Activated B cell treated with CpG ODN at 0.5 μM for 24 hours (primary cell): ENCODE measurements at regions of chr20 and their contacts with region 1.

Region 1: DNA sequence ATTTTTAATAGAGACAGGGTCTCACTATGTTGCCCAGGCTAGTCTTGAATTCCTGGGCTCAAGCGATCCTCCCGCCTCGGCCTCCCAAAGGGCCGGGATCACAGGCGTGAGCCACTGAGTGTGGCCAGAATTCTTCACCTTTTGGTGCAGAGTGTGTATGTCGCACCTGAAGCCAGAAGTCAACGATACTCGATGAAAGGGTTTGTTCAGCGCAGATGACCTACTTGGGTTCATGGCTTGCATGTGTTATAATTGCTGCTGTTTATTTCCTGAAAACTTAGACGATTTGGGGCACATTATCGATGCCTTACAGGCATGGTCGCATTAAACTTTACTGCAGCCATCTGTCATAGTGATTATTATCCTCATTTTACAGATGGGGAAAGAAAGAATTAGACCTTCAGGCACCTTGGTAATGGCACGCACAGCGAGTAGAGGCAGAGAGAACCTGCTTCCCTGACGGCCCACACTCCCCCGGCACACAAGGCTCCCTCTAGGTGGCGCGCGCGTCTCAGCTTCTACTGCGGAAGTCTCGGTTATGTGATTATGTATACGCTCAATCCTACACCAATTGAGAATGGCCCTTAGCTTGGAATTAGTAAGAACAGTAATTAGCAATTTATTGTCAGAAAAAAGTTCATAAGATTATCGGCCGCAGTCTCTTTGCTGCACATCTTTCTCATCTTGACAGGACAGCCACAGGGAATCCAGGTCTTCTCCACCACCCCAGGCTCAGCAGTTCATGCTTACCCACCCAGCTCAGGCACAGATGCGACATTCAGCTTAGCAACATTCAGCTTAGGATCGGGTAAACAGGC is 212.8 kb upstream of the PROKR2 start:
- DNase-seq: peak; percentile 74
- ATAC-seq: peak; percentile 92
- H3K4me3 Mint-ChIP-seq: peak overlapping the region; percentile 29
- H3K27ac Mint-ChIP-seq: peak overlapping the region; percentile 46
- H3K4me1 Mint-ChIP-seq: peaks cover 11% of the 10 kb centered on the region
- H3K27me3 Mint-ChIP-seq: no peaks in the 10 kb centered on the region
- CTCF ChIP-seq: no peak

Region 2: GRCh38 chr20:5569021-5569420 is 39.5 kb after region 1 on chr20:
- CTCF ChIA-PET with region 1: interaction called, 8 read pairs
- POLR2A ChIA-PET with region 1: no interaction called
- intact Hi-C with region 1: loop called (anchors 1 kb)
- DNase-seq: no peak
- ATAC-seq: peak; percentile 90
- H3K4me3 Mint-ChIP-seq: no peak overlapping the region
- H3K27ac Mint-ChIP-seq: peak overlapping the region; percentile 43
- H3K4me1 Mint-ChIP-seq: peaks cover 23% of the 10 kb centered on the region
- H3K27me3 Mint-ChIP-seq: no peaks in the 10 kb centered on the region
- CTCF ChIP-seq: peak; percentile 67

Region 3: GRCh38 chr20:5658912-5659345 is 129.4 kb after region 1 on chr20:
- CTCF ChIA-PET with region 1: no interaction called
- POLR2A ChIA-PET with region 1: no interaction called
- intact Hi-C with region 1: no loop called
- DNase-seq: peak; percentile 38
- ATAC-seq: peak; percentile 81
- H3K4me3 Mint-ChIP-seq: peak overlapping the region; percentile 54
- H3K27ac Mint-ChIP-seq: peak overlapping the region; percentile 88
- H3K4me1 Mint-ChIP-seq: peaks cover 54% of the 10 kb centered on the region
- H3K27me3 Mint-ChIP-seq: no peaks in the 10 kb centered on the region
- CTCF ChIP-seq: no peak

Region 4: GRCh38 chr20:5822569-5822968 is 293.0 kb after region 1 on chr20:
- CTCF ChIA-PET with region 1: interaction called, 4 read pairs
- POLR2A ChIA-PET with region 1: no interaction called
- intact Hi-C with region 1: loop called (anchors 1 kb)
- DNase-seq: no peak
- ATAC-seq: peak; percentile 72
- H3K4me3 Mint-ChIP-seq: no peak overlapping the region
- H3K27ac Mint-ChIP-seq: peak overlapping the region; percentile 38
- H3K4me1 Mint-ChIP-seq: peaks cover 30% of the 10 kb centered on the region
- H3K27me3 Mint-ChIP-seq: no peaks in the 10 kb centered on the region
- CTCF ChIP-seq: no peak

Region 5: DNA sequence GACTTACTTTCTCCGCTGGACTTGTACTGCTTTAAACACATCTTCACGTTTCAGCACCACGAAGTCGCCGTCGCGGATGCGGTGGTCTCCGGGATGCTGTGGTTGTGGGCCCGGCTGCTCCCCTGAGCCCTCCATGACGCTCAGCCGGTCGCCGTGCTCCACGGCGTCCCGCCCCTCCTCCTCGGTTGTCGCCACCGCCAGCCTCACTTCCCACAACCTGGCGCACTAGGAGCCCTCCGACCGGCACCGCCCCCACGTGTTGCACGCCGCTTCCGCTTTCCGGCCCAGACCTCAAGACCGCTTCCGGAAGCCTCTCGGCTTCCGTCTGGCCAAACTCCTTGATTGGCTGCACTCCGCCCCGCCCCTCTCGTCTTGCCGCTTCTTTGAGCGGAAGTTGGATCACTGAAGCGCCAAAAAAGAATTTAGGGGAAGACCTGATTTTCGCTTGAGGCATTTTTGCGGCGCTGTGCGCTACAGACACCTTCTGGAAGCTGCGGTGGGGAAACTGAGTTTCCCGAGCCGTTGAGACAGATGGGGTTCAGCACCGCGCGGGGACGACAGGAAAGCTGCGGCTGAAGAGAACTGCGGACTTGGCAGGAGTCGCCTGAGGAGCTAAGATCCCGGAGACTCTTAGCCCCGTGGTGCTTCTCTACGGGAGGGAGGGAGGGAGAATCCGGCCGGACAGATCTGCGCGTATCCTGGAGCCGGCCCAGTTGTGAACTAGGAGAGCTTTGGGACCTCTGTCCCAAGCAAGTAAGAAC is 420.9 kb after region 1 on chr20 and contains the starts of genes MCM8 and TRMT6:
- CTCF ChIA-PET with region 1: interaction called, 5 read pairs
- POLR2A ChIA-PET with region 1: no interaction called
- intact Hi-C with region 1: loop called (anchors 1 kb)
- DNase-seq: peak; percentile 94
- ATAC-seq: peak; percentile 97
- H3K4me3 Mint-ChIP-seq: peak within 1 kb of the TSS; percentile 93
- H3K27ac Mint-ChIP-seq: peak within 1 kb of the TSS; percentile 90
- H3K4me1 Mint-ChIP-seq: peaks cover 34% of the 10 kb centered on the region
- H3K27me3 Mint-ChIP-seq: no peaks in the 10 kb centered on the region
- CTCF ChIP-seq: no peak
- total RNA-seq, gene MCM8: 12.9 and 13.0 TPM in 2 replicates
- total RNA-seq, gene TRMT6: 21.0 and 25.5 TPM in 2 replicates

Region 6: GRCh38 chr20:6074145-6074561 is 544.6 kb after region 1 on chr20:
- CTCF ChIA-PET with region 1: interaction called, 85 read pairs
- POLR2A ChIA-PET with region 1: no interaction called
- intact Hi-C with region 1: loop called (anchors 1 kb)
- DNase-seq: no peak
- ATAC-seq: no peak
- H3K4me3 Mint-ChIP-seq: no peak overlapping the region
- H3K27ac Mint-ChIP-seq: no peak overlapping the region
- H3K4me1 Mint-ChIP-seq: no peaks in the 10 kb centered on the region
- H3K27me3 Mint-ChIP-seq: peaks cover 3% of the 10 kb centered on the region
- CTCF ChIP-seq: no peak